Left cardiac atrium (tissue), 4 donors: ENCODE measurements at regions of chr1 and their contacts with region 1.

Region 1: GRCh38 chr1:39189592-39190041 is 14.9 kb upstream of the MACF1 start:
- DNase-seq: no peak
- ATAC-seq: no peak

Region 2: GRCh38 chr1:39098546-39099250 is 90.9 kb before region 1 on chr1:
- intact Hi-C with region 1: loop called in 1 of 2 experiments (anchors 5 kb)
- DNase-seq: peak; percentile 63
- ATAC-seq: peak; percentile 68 to 73

Region 3: DNA sequence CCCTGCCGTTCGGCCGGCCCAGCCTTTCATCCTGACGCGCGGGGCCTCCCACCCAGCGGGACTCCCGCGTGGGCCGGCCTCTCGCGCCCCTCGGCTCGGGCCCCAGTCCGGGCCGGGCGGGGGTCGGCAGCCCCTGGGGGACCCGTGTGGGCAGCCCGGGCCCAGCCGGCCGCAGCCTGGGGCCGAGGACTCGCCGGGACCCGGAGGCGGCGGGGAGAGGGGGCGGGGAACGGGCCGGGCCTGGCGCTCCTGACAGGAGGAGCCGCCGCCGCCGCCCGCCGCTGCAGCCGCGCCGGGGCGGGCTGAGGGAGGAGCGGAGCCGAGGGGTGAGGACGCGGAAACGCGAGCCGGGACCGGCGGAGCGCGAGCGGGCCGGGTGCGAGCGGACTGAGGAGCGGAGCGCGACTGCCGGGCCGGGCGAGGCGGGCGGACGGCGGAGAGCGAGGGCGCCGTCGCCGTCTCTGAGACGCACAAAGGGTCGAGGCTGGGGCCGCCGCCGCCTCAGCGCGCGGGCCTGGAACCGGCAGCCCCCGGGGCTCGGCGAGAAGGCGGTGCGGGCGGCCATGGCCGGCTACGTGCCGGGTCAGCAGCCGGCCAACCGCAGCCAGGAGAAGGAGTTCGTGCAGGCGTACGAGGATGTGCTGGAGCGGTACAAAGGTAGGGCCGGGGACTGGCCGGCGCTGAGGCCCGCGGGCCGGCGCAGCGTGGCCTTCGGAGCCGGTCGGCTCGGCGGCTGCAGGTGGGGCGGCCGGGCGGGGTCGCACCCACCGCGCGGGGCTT is 84.4 kb before region 1 on chr1:
- intact Hi-C with region 1: loop called (anchors 2 to 5 kb)
- DNase-seq: peak; percentile 86
- ATAC-seq: peak; percentile 86 to 91

Region 4: GRCh38 chr1:39258146-39258924 is 68.7 kb after region 1 on chr1:
- intact Hi-C with region 1: loop called (anchors 5 kb)
- DNase-seq: peak; percentile 71
- ATAC-seq: peak; percentile 82 to 85

Region 5: GRCh38 chr1:39427374-39427773 is 237.8 kb after region 1 on chr1:
- intact Hi-C with region 1: loop called in 1 of 2 experiments (anchors 5 kb)
- DNase-seq: no peak
- ATAC-seq: peak; percentile 53 to 54